Gastrocnemius medialis (tissue), 4 donors: ENCODE measurements at regions of chr1 and their contacts with region 1.

Region 1: DNA sequence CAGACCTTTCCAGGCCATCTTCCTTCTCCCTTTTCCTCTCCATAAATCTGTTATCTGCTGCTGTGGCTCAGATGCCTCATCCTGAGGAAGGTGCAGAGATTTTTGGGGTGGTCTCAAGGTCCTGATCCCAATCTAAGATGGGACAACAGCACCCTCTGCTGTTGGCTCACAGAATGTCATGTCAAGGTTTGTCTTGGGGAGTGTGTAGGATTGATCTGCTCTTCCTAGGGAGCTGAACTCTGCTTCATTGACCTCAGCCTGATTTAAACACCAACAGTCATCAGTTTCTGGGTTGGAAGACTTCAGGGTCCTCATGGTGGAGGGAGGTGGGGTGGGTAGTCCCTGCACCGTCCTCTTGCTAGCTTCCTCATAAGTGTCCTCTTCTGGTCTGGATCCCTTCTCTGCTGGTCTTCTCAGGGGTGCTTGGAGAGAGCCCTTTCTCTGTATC is 62.8 kb upstream of the LAX1 start:
- DNase-seq: peak in 1 of 2 donors; percentile 23
- ATAC-seq: peak; percentile 77 to 79
- H3K4me3 ChIP-seq: no peak overlapping the region
- H3K27ac ChIP-seq: no peak overlapping the region
- H3K4me1 ChIP-seq: no peaks in the 10 kb centered on the region
- H3K27me3 ChIP-seq: no peaks in the 10 kb centered on the region
- CTCF ChIP-seq: peak; percentile 83 to 96 (median 93)
- POLR2A ChIP-seq: no peak

Region 2: DNA sequence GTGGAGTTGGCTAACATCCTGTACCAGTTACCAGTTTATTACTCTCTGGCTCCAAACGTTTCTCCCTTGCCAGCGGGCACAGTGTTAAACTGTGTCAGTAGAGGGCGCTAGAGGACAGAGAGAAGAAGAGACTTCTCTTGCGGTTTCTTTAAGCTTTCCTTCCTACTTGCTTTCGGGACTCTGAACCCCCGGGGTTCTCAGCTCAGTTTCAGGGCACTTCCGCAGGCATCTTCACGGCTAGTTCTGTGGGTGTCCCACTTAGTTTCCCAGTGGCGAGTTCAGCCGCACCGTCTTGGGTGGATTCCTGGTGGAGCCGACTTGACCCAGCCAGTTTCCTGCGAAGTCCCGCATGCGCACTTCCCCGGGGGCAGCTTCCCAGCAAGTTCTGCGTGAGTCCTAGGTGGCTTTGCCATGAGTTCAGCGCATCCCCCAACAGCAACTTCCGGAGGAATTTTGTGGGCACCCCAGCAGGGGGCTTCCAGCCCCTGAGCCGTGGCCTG is 434.8 kb before region 1 on chr1:
- in situ Hi-C with region 1: no loop called
- intact Hi-C with region 1: loop called (anchors 5 kb)
- DNase-seq: peak; percentile 66 to 86
- ATAC-seq: peak; percentile 73 to 78
- H3K4me3 ChIP-seq: peak overlapping the region; percentile 62 to 70 (median 66)
- H3K27ac ChIP-seq: peak overlapping the region; percentile 86 to 93 (median 88)
- H3K4me1 ChIP-seq: peaks cover 34 to 35% of the 10 kb centered on the region in 2 donors
- H3K27me3 ChIP-seq: no peaks in the 10 kb centered on the region
- CTCF ChIP-seq: peak; percentile 93 to 97 (median 94)
- POLR2A ChIP-seq: peak in 1 of 2 donors; percentile 11

Region 3: DNA sequence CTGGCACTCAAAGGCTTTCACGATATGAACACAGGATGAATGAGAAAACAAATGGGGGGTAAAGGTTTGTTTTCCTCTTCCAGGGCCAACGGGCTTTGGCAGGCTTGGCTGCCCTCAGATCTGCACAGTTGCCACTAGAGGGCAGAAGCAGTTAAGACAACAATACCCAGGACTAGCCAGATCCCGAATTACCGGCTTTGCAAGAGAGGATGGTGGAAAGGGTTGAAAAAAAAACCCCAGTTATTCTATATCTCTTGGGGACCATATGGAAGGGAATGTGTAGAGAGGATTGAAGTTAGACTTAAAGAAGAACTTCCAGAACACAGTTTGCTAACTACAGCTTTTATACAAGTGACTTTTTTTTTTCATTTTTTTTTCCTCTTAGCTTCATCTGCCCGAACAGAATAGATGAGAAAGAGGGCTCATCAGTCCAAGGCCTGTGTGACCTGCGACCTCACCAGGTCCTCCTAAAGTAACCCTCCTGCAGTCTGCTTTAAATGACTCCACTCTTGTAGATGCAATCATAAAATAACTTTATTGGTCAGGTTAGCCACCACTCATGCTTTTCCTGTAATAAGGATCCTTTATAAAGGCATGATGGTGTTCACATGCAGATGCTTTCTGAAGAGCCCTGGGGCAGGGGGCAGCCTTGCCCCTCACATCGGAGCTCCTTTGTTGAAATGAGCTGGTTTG is 361.9 kb before region 1 on chr1:
- in situ Hi-C with region 1: loop called in 1 of 4 experiments (anchors 10 kb)
- intact Hi-C with region 1: loop called (anchors 5 kb)
- DNase-seq: peak; percentile 63 to 67
- ATAC-seq: peak; percentile 53 to 65
- H3K4me3 ChIP-seq: no peak overlapping the region
- H3K27ac ChIP-seq: peak overlapping the region; percentile 0 to 71 (median 26)
- H3K4me1 ChIP-seq: peaks cover 28 to 37% of the 10 kb centered on the region in 2 donors
- H3K27me3 ChIP-seq: no peaks in the 10 kb centered on the region
- CTCF ChIP-seq: peak; percentile 71 to 89 (median 87)
- POLR2A ChIP-seq: no peak

Region 4: DNA sequence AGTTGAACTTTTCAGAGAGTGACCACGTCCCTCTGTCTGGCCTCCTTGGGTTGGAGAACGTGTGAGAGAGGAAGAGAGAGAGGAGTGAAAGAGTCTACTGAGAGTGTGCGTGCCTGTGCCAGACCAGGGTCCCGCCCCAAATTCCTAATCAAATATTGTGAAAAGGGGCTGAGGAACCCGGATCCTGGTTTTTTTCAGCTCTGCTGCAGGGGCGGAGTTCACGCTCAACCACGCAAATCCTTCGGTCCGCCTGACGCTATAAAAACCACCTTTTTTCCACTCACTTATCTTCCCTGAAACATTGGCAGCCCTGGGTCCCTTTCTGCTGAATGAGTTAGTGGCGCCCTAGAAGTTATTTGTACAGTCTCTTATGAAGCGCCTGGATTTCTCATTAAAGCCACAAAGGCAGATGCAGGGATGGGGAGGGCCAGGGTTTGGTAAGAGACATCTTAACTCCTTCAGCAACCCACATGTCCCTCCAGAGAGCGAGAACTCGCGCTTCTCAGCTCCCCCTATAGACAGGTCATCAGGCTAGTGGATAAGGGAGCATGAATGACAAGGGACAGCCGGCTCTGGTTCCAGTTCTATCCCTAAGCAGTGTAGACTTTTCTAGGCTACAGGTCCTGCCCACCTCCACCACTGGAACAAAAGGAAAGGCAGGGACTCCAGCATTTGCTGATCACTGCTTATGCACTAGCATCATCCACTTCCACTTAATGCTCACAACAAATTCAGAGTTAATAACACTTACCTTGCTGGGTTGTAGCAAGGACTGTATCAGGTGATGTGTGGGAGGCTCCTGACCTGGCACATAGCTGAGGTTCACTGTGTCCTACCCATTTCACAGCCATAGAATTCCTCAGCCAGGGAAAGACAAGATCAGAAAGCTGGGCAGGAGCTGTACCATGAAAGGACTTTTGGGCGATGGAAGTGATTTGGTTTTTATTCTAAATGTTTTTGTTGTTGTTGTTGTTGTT is 350.8 kb before region 1 on chr1 and contains the start of gene FMOD:
- in situ Hi-C with region 1: loop called in 3 of 4 experiments (anchors 10 to 25 kb)
- intact Hi-C with region 1: no loop called
- DNase-seq: peak in 1 of 2 donors; percentile 60
- ATAC-seq: peak; percentile 40 to 49
- H3K4me3 ChIP-seq: peak within 1 kb of the TSS in 3 of 4 donors; percentile 6 to 29 (median 17)
- H3K27ac ChIP-seq: peak within 1 kb of the TSS in 3 of 4 donors; percentile 29 to 66 (median 63)
- H3K4me1 ChIP-seq: peaks cover 0 to 5% of the 10 kb centered on the region in 2 donors
- H3K27me3 ChIP-seq: no peaks in the 10 kb centered on the region
- CTCF ChIP-seq: no peak
- POLR2A ChIP-seq: peak in 1 of 2 donors; percentile 13
- total RNA-seq, gene FMOD: 6.3 to 15.8 (median 7.8) TPM

Region 5: GRCh38 chr1:203368624-203369451 is 333.3 kb before region 1 on chr1:
- in situ Hi-C with region 1: loop called in 3 of 4 experiments (anchors 10 to 25 kb)
- intact Hi-C with region 1: no loop called
- DNase-seq: peak; percentile 75 to 83
- ATAC-seq: peak; percentile 89 to 91
- H3K4me3 ChIP-seq: no peak overlapping the region
- H3K27ac ChIP-seq: peak overlapping the region; percentile 37 to 59 (median 48)
- H3K4me1 ChIP-seq: peaks cover 0 to 7% of the 10 kb centered on the region in 2 donors
- H3K27me3 ChIP-seq: no peaks in the 10 kb centered on the region
- CTCF ChIP-seq: peak in 2 of 5 experiments; percentile 3 to 17
- POLR2A ChIP-seq: no peak

Region 6: DNA sequence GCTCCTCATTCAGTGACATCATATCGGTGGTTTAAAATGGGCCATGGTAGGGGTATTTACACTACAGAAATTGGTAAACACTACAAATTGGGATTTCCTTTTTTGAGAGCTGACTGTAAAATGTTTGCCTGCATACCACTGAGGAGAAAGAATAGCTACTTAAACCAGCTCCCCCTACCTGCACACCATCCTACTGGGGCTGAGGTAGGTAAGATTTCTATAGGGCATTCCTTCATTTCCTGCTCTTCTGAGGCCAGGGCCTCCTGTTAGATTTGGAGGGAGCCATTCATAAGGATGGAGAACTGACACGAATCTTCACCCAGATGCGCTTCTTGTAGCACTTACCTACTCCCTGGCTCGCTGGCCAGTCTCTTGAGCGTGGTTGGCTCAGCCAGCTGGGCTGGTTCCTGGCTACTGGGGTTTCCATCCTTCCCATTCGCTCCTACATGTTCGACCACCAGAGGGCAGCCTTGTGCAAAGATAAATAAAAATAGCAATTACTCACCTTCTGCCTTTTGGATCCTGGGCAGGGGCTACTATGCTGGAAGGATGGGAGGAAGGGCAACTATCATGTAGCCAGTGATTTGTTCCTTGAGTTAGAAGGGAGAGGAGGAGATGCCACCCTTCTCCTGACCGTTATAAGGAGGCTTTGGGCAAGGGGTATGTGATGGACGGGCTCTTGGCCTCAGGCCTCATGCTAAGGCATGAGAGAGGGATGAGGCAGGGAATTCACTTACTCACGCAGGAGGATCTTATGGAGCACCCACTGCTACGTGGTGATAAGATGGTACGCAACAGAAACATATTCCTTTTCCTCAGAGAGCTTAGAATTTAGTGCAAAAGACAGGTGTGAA is 197.5 kb before region 1 on chr1:
- in situ Hi-C with region 1: loop called (anchors 5 kb)
- intact Hi-C with region 1: loop called (anchors 1 kb)
- DNase-seq: peak; percentile 60 to 70
- ATAC-seq: peak; percentile 78 to 88
- H3K4me3 ChIP-seq: no peak overlapping the region
- H3K27ac ChIP-seq: no peak overlapping the region
- H3K4me1 ChIP-seq: peaks cover 11 to 13% of the 10 kb centered on the region in 2 donors
- H3K27me3 ChIP-seq: no peaks in the 10 kb centered on the region
- CTCF ChIP-seq: peak; percentile 65 to 94 (median 85)
- POLR2A ChIP-seq: no peak

Region 7: GRCh38 chr1:203612932-203613682 is 89.0 kb before region 1 on chr1:
- in situ Hi-C with region 1: loop called in 1 of 4 experiments (anchors 10 kb)
- intact Hi-C with region 1: no loop called
- DNase-seq: no peak
- ATAC-seq: no peak
- H3K4me3 ChIP-seq: no peak overlapping the region
- H3K27ac ChIP-seq: no peak overlapping the region
- H3K4me1 ChIP-seq: no peaks in the 10 kb centered on the region
- H3K27me3 ChIP-seq: no peaks in the 10 kb centered on the region
- CTCF ChIP-seq: no peak
- POLR2A ChIP-seq: no peak